CD4-positive, alpha-beta memory T cell (primary cell): ENCODE measurements at regions of chr1 and their contacts with region 1.

Region 1: DNA sequence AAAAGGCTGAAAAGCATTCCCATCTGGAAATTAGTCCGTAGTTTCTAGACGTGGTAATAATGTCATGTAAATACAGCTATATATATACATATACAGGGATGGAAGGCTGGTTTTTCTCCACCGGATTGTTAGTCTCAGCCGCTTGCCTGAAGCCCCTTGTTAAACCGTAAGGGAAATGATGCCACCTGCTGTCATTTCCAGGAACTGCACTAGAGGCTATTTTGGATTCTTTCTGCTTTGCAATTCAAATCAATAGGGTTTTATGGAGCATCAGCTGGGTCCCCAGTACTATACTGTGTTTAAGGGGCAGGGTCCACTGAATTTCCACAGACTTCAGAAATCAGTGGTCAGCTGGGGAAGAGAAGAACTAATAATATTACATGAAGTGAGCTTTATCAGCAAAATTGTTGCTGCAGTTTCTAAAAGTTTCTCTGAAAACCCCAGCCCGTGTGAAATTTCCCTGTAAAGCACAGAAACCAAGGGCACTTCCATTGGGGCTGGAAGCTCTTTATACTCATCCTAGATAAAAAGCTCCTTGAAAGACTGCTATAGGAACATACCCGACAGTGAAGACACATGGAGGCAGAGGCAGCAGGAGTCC is 33.8 kb upstream of the MPZL1 start:
- DNase-seq: peak; percentile 70 to 78 (median 73)
- H3K4me3 ChIP-seq: no peak overlapping the region
- H3K4me3 Mint-ChIP-seq: no peak overlapping the region
- H3K27ac ChIP-seq: peak overlapping the region; percentile 14
- H3K27ac Mint-ChIP-seq: peak overlapping the region; percentile 55 to 87 (median 70)
- H3K4me1 ChIP-seq: peaks cover 4% of the 10 kb centered on the region
- H3K4me1 Mint-ChIP-seq: peaks cover 10 to 35% (median 16%) of the 10 kb centered on the region in 4 donors
- H3K27me3 ChIP-seq: no peaks in the 10 kb centered on the region
- H3K27me3 Mint-ChIP-seq: no peaks in the 10 kb centered on the region

Region 2: DNA sequence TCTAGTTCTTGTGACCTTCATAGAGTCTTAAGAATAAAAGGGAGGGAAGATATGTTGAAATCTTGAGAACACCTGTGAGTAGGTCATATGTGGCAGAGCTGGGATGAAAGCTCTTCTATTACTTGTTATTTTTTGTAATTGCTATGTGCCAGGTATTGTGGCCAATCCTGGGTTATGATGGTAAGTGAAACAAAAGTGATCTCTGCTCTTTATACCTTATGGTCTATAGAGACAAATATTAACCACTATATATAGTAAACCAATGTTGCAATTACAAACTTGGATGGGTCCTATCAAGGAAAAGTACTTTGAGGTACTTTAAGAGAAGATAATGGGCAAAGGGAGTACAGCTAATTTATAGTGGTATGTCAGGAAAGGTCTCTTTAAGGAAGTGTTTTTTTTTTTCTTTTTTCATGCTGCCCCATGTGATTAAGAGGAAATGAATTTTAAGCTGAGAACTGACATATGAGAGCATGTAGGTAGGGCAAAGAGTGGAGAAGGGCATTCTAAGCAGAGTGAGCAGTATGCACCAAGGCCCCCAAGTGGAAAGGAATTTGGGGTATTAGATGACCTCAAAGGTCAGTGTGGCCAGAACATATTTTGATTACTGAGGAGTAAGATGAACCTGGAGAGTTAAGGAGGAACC is 424.1 kb before region 1 on chr1:
- CTCF ChIA-PET with region 1: no interaction called
- POLR2A ChIA-PET with region 1: no interaction called
- intact Hi-C with region 1: loop called (anchors 10 kb)
- DNase-seq: peak in 2 of 5 donors; percentile 4 to 8
- H3K4me3 ChIP-seq: no peak overlapping the region
- H3K4me3 Mint-ChIP-seq: no peak overlapping the region
- H3K27ac ChIP-seq: no peak overlapping the region
- H3K27ac Mint-ChIP-seq: no peak overlapping the region
- H3K4me1 ChIP-seq: peaks cover 45% of the 10 kb centered on the region
- H3K4me1 Mint-ChIP-seq: peaks cover 17 to 27% (median 19%) of the 10 kb centered on the region in 4 donors
- H3K27me3 ChIP-seq: no peaks in the 10 kb centered on the region
- H3K27me3 Mint-ChIP-seq: no peaks in the 10 kb centered on the region

Region 3: GRCh38 chr1:167599957-167600581 is 88.0 kb before region 1 on chr1:
- CTCF ChIA-PET with region 1: interaction called, 302 read pairs
- POLR2A ChIA-PET with region 1: interaction called, 46 read pairs
- intact Hi-C with region 1: loop called (anchors 1 kb)
- DNase-seq: peak; percentile 56 to 74 (median 65)
- H3K4me3 ChIP-seq: no peak overlapping the region
- H3K4me3 Mint-ChIP-seq: peak overlapping the region in 7 of 8 donors; percentile 23 to 82 (median 57)
- H3K27ac ChIP-seq: no peak overlapping the region
- H3K27ac Mint-ChIP-seq: peak overlapping the region; percentile 25 to 62 (median 40)
- H3K4me1 ChIP-seq: peaks cover 39% of the 10 kb centered on the region
- H3K4me1 Mint-ChIP-seq: peaks cover 31 to 47% (median 41%) of the 10 kb centered on the region in 4 donors
- H3K27me3 ChIP-seq: no peaks in the 10 kb centered on the region
- H3K27me3 Mint-ChIP-seq: no peaks in the 10 kb centered on the region

Region 4: DNA sequence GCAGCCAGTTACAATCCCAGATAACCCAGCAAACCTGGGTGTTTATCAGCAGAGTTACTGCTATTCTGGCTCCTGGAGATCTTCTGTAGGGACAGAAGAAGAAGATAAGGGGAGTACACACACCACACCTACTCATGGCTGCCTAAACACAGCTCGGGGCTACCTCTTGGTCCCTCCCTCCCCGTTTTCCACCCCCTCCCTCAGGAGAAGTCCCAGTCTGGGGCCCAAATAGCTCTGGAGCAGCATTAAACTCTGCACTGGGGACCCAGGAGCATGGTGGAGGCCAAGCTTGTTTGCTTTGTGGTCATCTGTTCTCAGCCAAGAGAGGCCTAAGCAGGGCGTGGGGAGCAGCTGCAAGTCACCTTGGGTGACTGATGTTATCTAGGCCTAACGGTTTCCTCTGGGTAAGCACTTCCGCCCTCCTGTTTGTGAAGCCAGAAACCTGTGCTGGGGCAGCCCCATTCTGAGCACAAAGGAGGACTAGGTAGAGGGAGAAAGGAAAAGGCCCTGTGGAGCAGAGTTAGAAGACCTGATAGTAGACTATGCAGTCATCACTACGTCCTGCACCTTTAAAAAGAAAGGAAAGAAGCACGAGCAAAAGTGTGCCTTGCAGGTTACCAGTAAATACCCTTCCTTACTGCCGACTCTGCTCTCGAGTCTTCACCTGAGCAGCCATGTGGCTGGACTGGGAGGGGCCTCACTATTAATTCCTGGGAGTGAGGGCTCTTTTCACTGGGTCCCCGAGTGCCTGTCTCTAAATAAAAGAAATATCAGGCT is 60.0 kb before region 1 on chr1:
- CTCF ChIA-PET with region 1: interaction called, 97 read pairs
- POLR2A ChIA-PET with region 1: interaction called, 11 read pairs
- intact Hi-C with region 1: no loop called
- DNase-seq: peak; percentile 78 to 95 (median 81)
- H3K4me3 ChIP-seq: peak overlapping the region; percentile 74 to 82
- H3K4me3 Mint-ChIP-seq: peak overlapping the region; percentile 90 to 99 (median 94)
- H3K27ac ChIP-seq: peak overlapping the region; percentile 90
- H3K27ac Mint-ChIP-seq: peak overlapping the region; percentile 94 to 99 (median 96)
- H3K4me1 ChIP-seq: peaks cover 56% of the 10 kb centered on the region
- H3K4me1 Mint-ChIP-seq: peaks cover 46 to 81% (median 54%) of the 10 kb centered on the region in 4 donors
- H3K27me3 ChIP-seq: no peaks in the 10 kb centered on the region
- H3K27me3 Mint-ChIP-seq: no peaks in the 10 kb centered on the region

Region 5: GRCh38 chr1:167669209-167670124 is 18.6 kb before region 1 on chr1:
- CTCF ChIA-PET with region 1: interaction called, 31 read pairs
- POLR2A ChIA-PET with region 1: no interaction called
- intact Hi-C with region 1: no loop called
- DNase-seq: no peak
- H3K4me3 ChIP-seq: no peak overlapping the region
- H3K4me3 Mint-ChIP-seq: peak overlapping the region in 2 of 8 donors; percentile 34 to 60
- H3K27ac ChIP-seq: peak overlapping the region; percentile 9
- H3K27ac Mint-ChIP-seq: peak overlapping the region in 5 of 7 donors; percentile 78 to 92 (median 83)
- H3K4me1 ChIP-seq: peaks cover 93% of the 10 kb centered on the region
- H3K4me1 Mint-ChIP-seq: peaks cover 76 to 99% (median 85%) of the 10 kb centered on the region in 4 donors
- H3K27me3 ChIP-seq: no peaks in the 10 kb centered on the region
- H3K27me3 Mint-ChIP-seq: no peaks in the 10 kb centered on the region

Region 6: GRCh38 chr1:167803358-167804207 is 115.6 kb after region 1 on chr1:
- CTCF ChIA-PET with region 1: no interaction called
- POLR2A ChIA-PET with region 1: no interaction called
- intact Hi-C with region 1: loop called (anchors 1 kb)
- DNase-seq: peak; percentile 70 to 81 (median 73)
- H3K4me3 ChIP-seq: no peak overlapping the region
- H3K4me3 Mint-ChIP-seq: peak overlapping the region in 7 of 8 donors; percentile 35 to 70 (median 57)
- H3K27ac ChIP-seq: no peak overlapping the region
- H3K27ac Mint-ChIP-seq: peak overlapping the region in 5 of 7 donors; percentile 6 to 87 (median 62)
- H3K4me1 ChIP-seq: peaks cover 26% of the 10 kb centered on the region
- H3K4me1 Mint-ChIP-seq: peaks cover 23 to 34% (median 26%) of the 10 kb centered on the region in 4 donors
- H3K27me3 ChIP-seq: no peaks in the 10 kb centered on the region
- H3K27me3 Mint-ChIP-seq: peaks cover 2% of the 10 kb centered on the region in 2 donors

Region 7: GRCh38 chr1:168148916-168149315 is 460.9 kb after region 1 on chr1:
- CTCF ChIA-PET with region 1: no interaction called
- POLR2A ChIA-PET with region 1: no interaction called
- intact Hi-C with region 1: no loop called
- DNase-seq: no peak
- H3K4me3 ChIP-seq: no peak overlapping the region
- H3K4me3 Mint-ChIP-seq: peak overlapping the region in 1 of 8 donors; percentile 5
- H3K27ac ChIP-seq: no peak overlapping the region
- H3K27ac Mint-ChIP-seq: peak overlapping the region in 2 of 7 donors; percentile 22 to 38
- H3K4me1 ChIP-seq: no peaks in the 10 kb centered on the region
- H3K4me1 Mint-ChIP-seq: peaks cover 0 to 13% (median 4%) of the 10 kb centered on the region in 4 donors
- H3K27me3 ChIP-seq: no peaks in the 10 kb centered on the region
- H3K27me3 Mint-ChIP-seq: peaks cover 0 to 1% of the 10 kb centered on the region in 2 donors